ENCODE measurements at regions of chr2 and their contacts with region 1.

Region 1: GRCh38 chr2:229133155-229133772 is 137.8 kb downstream of the PID1 start:
- DNase-seq: peak in 3 of 6 donors; percentile 21 to 26 (median 25)
- ATAC-seq: peak; percentile 89 to 98 (median 96)
- H3K4me3 ChIP-seq: no peak overlapping the region
- H3K27ac ChIP-seq: no peak overlapping the region
- H3K4me1 ChIP-seq: peaks cover 0 to 12% (median 7%) of the 10 kb centered on the region in 3 donors
- H3K27me3 ChIP-seq: no peaks in the 10 kb centered on the region
- CTCF ChIP-seq: peak in 3 of 4 donors; percentile 32 to 39 (median 34)

Region 2: GRCh38 chr2:229273723-229274338 is 140.6 kb after region 1 on chr2:
- intact Hi-C with region 1: loop called in 2 of 3 experiments (anchors 5 to 10 kb)
- DNase-seq: peak in 4 of 6 donors; percentile 47 to 71 (median 64)
- ATAC-seq: peak; percentile 81 to 94 (median 90)
- H3K4me3 ChIP-seq: peak overlapping the region in 2 of 4 donors; percentile 26 to 33
- H3K27ac ChIP-seq: peak overlapping the region in 2 of 4 donors; percentile 16 to 53
- H3K4me1 ChIP-seq: peaks cover 0 to 20% (median 10%) of the 10 kb centered on the region in 3 donors
- H3K27me3 ChIP-seq: no peaks in the 10 kb centered on the region
- CTCF ChIP-seq: peak; percentile 46 to 76 (median 66)

Region 3: GRCh38 chr2:229586746-229587705 is 453.8 kb after region 1 on chr2:
- intact Hi-C with region 1: loop called in 1 of 3 experiments (anchors 5 kb)
- DNase-seq: peak; percentile 48 to 84 (median 74)
- ATAC-seq: peak; percentile 86 to 99 (median 98)
- H3K4me3 ChIP-seq: peak overlapping the region in 1 of 4 donors; percentile 17
- H3K27ac ChIP-seq: no peak overlapping the region
- H3K4me1 ChIP-seq: no peaks in the 10 kb centered on the region
- H3K27me3 ChIP-seq: no peaks in the 10 kb centered on the region
- CTCF ChIP-seq: peak; percentile 64 to 81 (median 76)

Measured in pancreas (tissue), 10 donors.